ENCODE measurements at regions of chr22 and their contacts with region 1.

Region 1: DNA sequence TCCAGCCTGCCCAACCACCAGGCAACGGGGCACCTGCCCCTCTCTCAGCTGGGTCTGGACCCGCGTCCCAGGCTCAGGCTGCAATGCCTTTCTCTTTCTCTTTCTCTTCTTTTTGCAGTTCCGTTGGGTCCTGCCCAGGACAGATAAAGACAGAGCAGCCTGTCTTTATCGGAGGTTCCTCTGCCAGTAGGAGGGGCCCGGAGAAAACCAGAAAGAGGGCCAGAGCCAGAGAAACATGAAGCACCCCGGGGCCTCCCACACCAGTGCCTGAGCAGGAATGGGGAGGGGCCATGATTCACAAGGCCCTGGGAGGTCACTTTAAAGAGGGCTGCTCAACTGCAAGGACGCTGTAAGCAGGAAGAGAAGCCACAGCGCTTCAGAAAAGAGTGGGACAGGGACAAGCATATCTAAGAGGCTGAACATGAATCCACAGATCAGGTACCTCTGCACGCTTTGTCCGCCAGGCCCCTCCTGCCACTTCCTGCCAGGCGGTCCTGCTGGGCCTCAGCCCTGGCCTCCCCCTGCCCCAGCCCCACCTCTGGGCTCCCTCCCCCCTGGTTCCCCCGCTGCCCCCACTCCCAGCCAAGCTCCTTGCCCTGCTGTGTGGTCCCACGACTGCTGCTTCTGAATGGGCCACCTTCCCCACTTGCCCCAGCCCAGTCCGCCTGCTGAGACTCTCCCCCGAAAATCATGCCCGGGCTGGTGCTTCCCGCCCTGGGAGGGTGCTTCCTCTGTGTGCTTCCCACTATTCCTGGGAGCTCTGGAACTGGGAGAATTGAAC is at the start of gene APOBEC3C:
- DNase-seq: peak; percentile 92
- H3K4me3 ChIP-seq: peak within 1 kb of the TSS; percentile 83
- H3K27ac ChIP-seq: peak within 1 kb of the TSS; percentile 57
- H3K4me1 ChIP-seq: no peaks in the 10 kb centered on the region
- H3K27me3 ChIP-seq: no peaks in the 10 kb centered on the region
- total RNA-seq, gene APOBEC3C: 6.6 and 7.6 TPM in 2 replicates

Region 2: GRCh38 chr22:38766076-38766777 is 247.9 kb before region 1 on chr22:
- in situ Hi-C with region 1: no loop called
- DNase-seq: peak; percentile 84
- H3K4me3 ChIP-seq: no peak overlapping the region
- H3K27ac ChIP-seq: no peak overlapping the region
- H3K4me1 ChIP-seq: peaks cover 12% of the 10 kb centered on the region
- H3K27me3 ChIP-seq: no peaks in the 10 kb centered on the region

Region 3: GRCh38 chr22:38911434-38911833 is 102.7 kb before region 1 on chr22:
- in situ Hi-C with region 1: no loop called
- DNase-seq: no peak
- H3K4me3 ChIP-seq: no peak overlapping the region
- H3K27ac ChIP-seq: no peak overlapping the region
- H3K4me1 ChIP-seq: no peaks in the 10 kb centered on the region
- H3K27me3 ChIP-seq: peaks cover 39% of the 10 kb centered on the region

Region 4: GRCh38 chr22:39123751-39124601 is 109.8 kb after region 1 on chr22:
- in situ Hi-C with region 1: loop called (anchors 10 kb)
- DNase-seq: no peak
- H3K4me3 ChIP-seq: no peak overlapping the region
- H3K27ac ChIP-seq: no peak overlapping the region
- H3K4me1 ChIP-seq: no peaks in the 10 kb centered on the region
- H3K27me3 ChIP-seq: no peaks in the 10 kb centered on the region

Measured in GM23248 (cell line).